CD4-positive, alpha-beta T cell (primary cell): ENCODE measurements at regions of chr11 and their contacts with region 1.

Region 1: GRCh38 chr11:78574386-78575381 is at the start of gene NARS2:
- DNase-seq: peak; percentile 94 to 99 (median 98)
- ATAC-seq: peak; percentile 96
- H3K4me3 ChIP-seq: peak within 1 kb of the TSS; percentile 82
- H3K4me3 Mint-ChIP-seq: peak within 1 kb of the TSS; percentile 93
- H3K27ac ChIP-seq: peak within 1 kb of the TSS; percentile 62 to 74
- H3K27ac Mint-ChIP-seq: peak within 1 kb of the TSS; percentile 96
- H3K4me1 ChIP-seq: peaks cover 14% of the 10 kb centered on the region
- H3K4me1 Mint-ChIP-seq: peaks cover 48% of the 10 kb centered on the region
- H3K27me3 ChIP-seq: no peaks in the 10 kb centered on the region
- H3K27me3 Mint-ChIP-seq: no peaks in the 10 kb centered on the region
- CTCF ChIP-seq: no peak
- total RNA-seq, gene NARS2: 8.7 to 9.3 TPM

Region 2: GRCh38 chr11:77473801-77474683 is 1100.6 kb before region 1 on chr11 and contains the start of gene PAK1:
- CTCF ChIA-PET with region 1: no interaction called
- POLR2A ChIA-PET with region 1: no interaction called
- intact Hi-C with region 1: loop called in 1 of 2 experiments (anchors 10 kb)
- DNase-seq: peak; percentile 61 to 99 (median 85)
- ATAC-seq: peak; percentile 73
- H3K4me3 ChIP-seq: peak within 1 kb of the TSS; percentile 64
- H3K4me3 Mint-ChIP-seq: peak within 1 kb of the TSS; percentile 97
- H3K27ac ChIP-seq: peak within 1 kb of the TSS in 1 of 2 donors; percentile 29
- H3K27ac Mint-ChIP-seq: peak within 1 kb of the TSS; percentile 96
- H3K4me1 ChIP-seq: peaks cover 14% of the 10 kb centered on the region
- H3K4me1 Mint-ChIP-seq: peaks cover 25% of the 10 kb centered on the region
- H3K27me3 ChIP-seq: peaks cover 2 to 5% of the 10 kb centered on the region in 2 experiments
- H3K27me3 Mint-ChIP-seq: peaks cover 10% of the 10 kb centered on the region
- CTCF ChIP-seq: no peak
- total RNA-seq, gene PAK1: 6.9 to 12.6 TPM

Region 3: GRCh38 chr11:77820563-77821348 is 753.9 kb before region 1 on chr11 and contains the starts of genes AAMDC and RSF1:
- CTCF ChIA-PET with region 1: no interaction called
- POLR2A ChIA-PET with region 1: no interaction called
- intact Hi-C with region 1: loop called in 1 of 2 experiments (anchors 5 kb)
- DNase-seq: peak; percentile 92 to 99 (median 96)
- ATAC-seq: peak; percentile 80
- H3K4me3 ChIP-seq: peak within 1 kb of the TSS; percentile 84
- H3K4me3 Mint-ChIP-seq: peak within 1 kb of the TSS; percentile 98
- H3K27ac ChIP-seq: peak within 1 kb of the TSS; percentile 74 to 95
- H3K27ac Mint-ChIP-seq: peak within 1 kb of the TSS; percentile 92
- H3K4me1 ChIP-seq: peaks cover 29% of the 10 kb centered on the region
- H3K4me1 Mint-ChIP-seq: peaks cover 46% of the 10 kb centered on the region
- H3K27me3 ChIP-seq: no peaks in the 10 kb centered on the region
- H3K27me3 Mint-ChIP-seq: no peaks in the 10 kb centered on the region
- CTCF ChIP-seq: peak; percentile 69
- total RNA-seq, gene AAMDC: 1.5 to 2.1 TPM
- total RNA-seq, gene RSF1: 87.7 to 91.9 TPM

Region 4: DNA sequence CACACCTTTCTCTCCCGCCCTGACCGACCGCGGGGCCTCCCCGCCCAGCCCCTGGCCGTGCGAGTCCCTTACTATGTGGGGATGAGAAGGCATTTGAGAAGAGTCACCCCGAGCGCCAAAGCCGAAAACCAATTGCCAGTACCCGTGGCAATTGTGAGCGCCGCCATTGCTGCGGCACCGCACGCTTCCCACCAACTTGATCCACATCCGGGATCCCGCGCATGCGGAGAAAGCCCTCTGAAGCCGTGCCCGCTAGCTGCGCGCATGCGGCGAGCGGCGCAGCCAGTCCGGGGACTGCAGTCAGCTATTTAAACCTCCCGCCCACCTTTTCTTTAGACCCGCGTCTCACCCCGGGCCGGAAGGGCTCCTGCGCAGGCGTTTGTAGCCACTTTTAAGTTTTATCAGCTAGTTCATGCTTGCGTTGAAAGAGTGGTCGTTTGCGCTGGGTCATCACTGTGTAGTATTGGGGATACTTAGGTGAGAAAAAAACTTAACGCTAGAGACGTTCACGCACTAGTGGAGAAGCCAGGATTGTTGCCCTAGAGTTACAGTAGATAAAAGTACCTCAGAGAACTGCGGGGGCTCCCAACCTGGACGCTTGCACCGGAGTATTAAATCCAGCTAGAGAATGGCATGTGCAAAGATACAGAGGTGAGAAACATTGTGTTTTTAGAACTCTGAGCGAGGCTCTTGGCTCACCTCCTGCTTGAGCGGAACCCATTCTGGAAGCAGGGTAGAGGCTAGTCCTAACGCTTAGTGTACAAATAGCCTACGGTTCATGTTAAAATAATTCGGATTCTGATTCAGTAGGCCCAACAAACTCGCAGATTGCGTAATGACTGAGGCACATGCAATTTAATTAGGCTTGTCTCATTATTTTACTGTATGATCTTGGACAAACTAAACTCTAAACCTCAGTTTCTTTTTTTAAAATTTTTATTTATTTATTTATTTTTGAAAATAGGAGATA is 435.0 kb before region 1 on chr11 and contains the start of gene ALG8:
- CTCF ChIA-PET with region 1: no interaction called
- POLR2A ChIA-PET with region 1: interaction called, 11 read pairs
- intact Hi-C with region 1: loop called in 1 of 2 experiments (anchors 2 kb)
- DNase-seq: peak; percentile 96 to 98 (median 97)
- ATAC-seq: peak; percentile 94
- H3K4me3 ChIP-seq: peak within 1 kb of the TSS; percentile 82
- H3K4me3 Mint-ChIP-seq: peak within 1 kb of the TSS; percentile 96
- H3K27ac ChIP-seq: peak within 1 kb of the TSS; percentile 72 to 84
- H3K27ac Mint-ChIP-seq: peak within 1 kb of the TSS; percentile 91
- H3K4me1 ChIP-seq: peaks cover 20% of the 10 kb centered on the region
- H3K4me1 Mint-ChIP-seq: peaks cover 49% of the 10 kb centered on the region
- H3K27me3 ChIP-seq: no peaks in the 10 kb centered on the region
- H3K27me3 Mint-ChIP-seq: no peaks in the 10 kb centered on the region
- CTCF ChIP-seq: no peak
- total RNA-seq, gene ALG8: 14.4 to 14.9 TPM

Region 5: GRCh38 chr11:78416305-78417178 is 158.1 kb before region 1 on chr11:
- CTCF ChIA-PET with region 1: no interaction called
- POLR2A ChIA-PET with region 1: interaction called, 19 read pairs
- intact Hi-C with region 1: no loop called
- DNase-seq: peak; percentile 57 to 86 (median 74)
- ATAC-seq: peak; percentile 70
- H3K4me3 ChIP-seq: peak overlapping the region; percentile 59
- H3K4me3 Mint-ChIP-seq: peak overlapping the region; percentile 88
- H3K27ac ChIP-seq: peak overlapping the region in 1 of 2 donors; percentile 4
- H3K27ac Mint-ChIP-seq: peak overlapping the region; percentile 84
- H3K4me1 ChIP-seq: peaks cover 33% of the 10 kb centered on the region
- H3K4me1 Mint-ChIP-seq: peaks cover 22% of the 10 kb centered on the region
- H3K27me3 ChIP-seq: peaks cover 0 to 5% of the 10 kb centered on the region in 2 experiments
- H3K27me3 Mint-ChIP-seq: peaks cover 28% of the 10 kb centered on the region
- CTCF ChIP-seq: peak; percentile 73